ENCODE measurements at regions of chr2 and their contacts with region 1.

Region 1: DNA sequence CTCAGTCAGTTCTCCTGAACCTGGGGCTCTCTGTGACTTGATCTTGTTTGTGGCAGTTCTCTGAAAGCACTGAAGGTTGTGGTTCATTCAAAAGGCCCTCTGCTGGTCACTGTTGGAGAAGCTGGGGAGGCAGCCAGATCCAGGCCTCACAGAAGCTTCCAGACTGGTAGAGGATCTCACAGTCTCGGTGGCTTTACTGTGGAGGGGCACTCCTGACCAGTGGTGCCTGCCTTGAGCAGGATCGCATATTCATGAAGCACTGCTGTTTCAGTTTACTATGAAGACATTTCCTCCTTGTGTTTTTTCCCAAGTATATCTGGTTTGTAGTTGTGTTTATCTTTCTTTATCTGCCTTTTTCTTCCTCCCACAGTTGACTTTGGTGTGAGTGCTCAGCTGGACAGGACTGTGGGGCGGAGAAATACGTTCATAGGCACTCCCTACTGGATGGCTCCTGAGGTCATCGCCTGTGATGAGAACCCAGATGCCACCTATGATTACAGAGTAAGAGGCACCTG is 133.9 kb downstream of the MAP4K4 start:
- DNase-seq: no peak
- H3K4me3 ChIP-seq: no peak overlapping the region
- CTCF ChIP-seq: peak; percentile 84

Region 2: GRCh38 chr2:101518578-101519492 is 312.6 kb before region 1 on chr2:
- CTCF ChIA-PET with region 1: interaction called, 13 read pairs
- POLR2A ChIA-PET with region 1: no interaction called
- DNase-seq: no peak
- H3K4me3 ChIP-seq: no peak overlapping the region
- CTCF ChIP-seq: peak; percentile 41

Region 3: GRCh38 chr2:101746388-101746723 is 85.1 kb before region 1 on chr2:
- CTCF ChIA-PET with region 1: interaction called, 10 read pairs
- POLR2A ChIA-PET with region 1: no interaction called
- DNase-seq: no peak
- H3K4me3 ChIP-seq: no peak overlapping the region
- CTCF ChIP-seq: no peak

Region 4: GRCh38 chr2:101781326-101781725 is 50.1 kb before region 1 on chr2:
- CTCF ChIA-PET with region 1: interaction called, 22 read pairs
- POLR2A ChIA-PET with region 1: no interaction called
- DNase-seq: no peak
- H3K4me3 ChIP-seq: no peak overlapping the region
- CTCF ChIP-seq: no peak

Region 5: GRCh38 chr2:102652126-102652525 is 820.7 kb after region 1 on chr2:
- CTCF ChIA-PET with region 1: no interaction called
- POLR2A ChIA-PET with region 1: no interaction called
- DNase-seq: no peak
- H3K4me3 ChIP-seq: no peak overlapping the region
- CTCF ChIP-seq: no peak

Measured in AG04449 (cell line).